ENCODE measurements at regions of chr19 and their contacts with region 1.

Region 1: DNA sequence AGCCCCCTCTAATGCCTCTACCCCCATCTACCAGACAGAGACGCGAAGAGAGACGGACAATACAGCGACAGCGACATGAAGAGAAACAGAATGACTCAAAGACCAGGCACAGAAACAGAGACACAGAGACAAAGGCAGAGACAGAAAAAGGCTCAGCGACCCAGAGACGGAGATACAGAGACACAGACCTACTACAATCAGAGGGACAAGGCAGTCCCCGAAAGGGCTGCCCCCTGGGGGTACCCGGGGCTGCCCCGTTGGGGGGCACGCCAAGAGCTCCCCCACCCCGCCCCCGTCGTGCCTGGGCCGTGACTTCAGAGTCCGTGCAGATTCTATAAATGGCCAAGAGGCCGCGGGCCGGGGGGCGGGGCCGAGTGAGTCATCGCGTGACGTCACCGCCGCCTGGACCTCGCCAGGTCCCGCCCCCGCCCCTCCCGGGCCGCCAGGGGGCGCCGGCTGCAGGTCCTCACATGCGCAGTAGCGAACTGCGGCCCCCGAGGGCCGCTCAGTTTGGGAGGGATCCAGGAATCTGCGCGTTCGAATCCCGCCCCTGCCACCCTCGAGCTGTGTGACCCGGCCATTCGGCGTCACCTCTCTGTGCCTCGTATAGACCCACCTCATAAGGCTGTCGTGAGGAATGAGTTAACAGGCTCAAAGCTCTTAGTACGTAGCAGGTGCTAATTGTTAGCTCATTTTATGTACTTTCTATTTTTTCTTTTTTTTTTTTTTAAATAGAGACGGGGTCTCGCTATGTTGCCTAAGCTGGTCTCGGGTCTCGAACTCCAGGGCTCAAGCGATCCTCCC is 2.7 kb upstream of the CNN1 start:
- DNase-seq: peak; percentile 70
- H3K4me3 ChIP-seq: peak overlapping the region; percentile 50
- H3K27ac ChIP-seq: peak overlapping the region; percentile 81
- H3K27me3 ChIP-seq: no peaks in the 10 kb centered on the region
- CTCF ChIP-seq: peak; percentile 82

Region 2: GRCh38 chr19:11549386-11549953 is 13.5 kb after region 1 on chr19:
- CTCF ChIA-PET with region 1: no interaction called
- POLR2A ChIA-PET with region 1: no interaction called
- DNase-seq: no peak
- H3K4me3 ChIP-seq: no peak overlapping the region
- H3K27ac ChIP-seq: no peak overlapping the region
- H3K27me3 ChIP-seq: no peaks in the 10 kb centered on the region
- CTCF ChIP-seq: no peak

Region 3: DNA sequence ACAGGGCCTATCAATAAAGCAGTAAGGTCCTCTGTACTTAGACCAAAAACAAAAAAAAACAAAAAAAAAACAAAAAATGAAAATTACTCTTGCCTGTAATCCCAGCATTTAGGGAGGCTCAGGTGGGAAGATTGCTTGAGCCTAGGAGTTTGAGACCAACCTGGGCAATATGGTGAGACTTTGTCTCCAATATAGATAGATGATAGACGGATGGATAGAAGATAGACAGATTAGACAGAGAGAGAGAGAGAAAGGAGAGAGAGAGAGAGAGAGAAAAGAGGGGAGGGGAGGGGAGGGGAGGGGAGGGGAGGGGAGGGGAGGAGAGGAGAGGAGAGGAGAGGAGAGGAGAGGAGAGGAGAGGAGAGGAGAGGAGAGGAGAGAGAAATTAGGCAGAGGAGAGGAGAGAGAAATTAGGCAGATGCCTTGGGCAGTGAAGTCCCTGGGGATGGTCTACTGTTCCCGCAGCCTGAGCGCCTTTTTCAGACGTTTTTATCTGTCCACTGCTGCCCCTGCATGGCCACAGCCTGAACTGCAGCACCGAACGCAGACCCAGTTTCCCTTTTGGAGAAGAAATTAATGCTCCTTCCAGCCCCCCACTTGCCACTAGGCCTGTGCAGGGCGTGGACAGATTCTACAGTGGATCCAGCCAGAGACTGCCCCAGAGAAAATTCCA is 51.4 kb after region 1 on chr19:
- CTCF ChIA-PET with region 1: interaction called, 12 read pairs
- POLR2A ChIA-PET with region 1: no interaction called
- DNase-seq: peak; percentile 20
- H3K4me3 ChIP-seq: no peak overlapping the region
- H3K27ac ChIP-seq: no peak overlapping the region
- H3K27me3 ChIP-seq: no peaks in the 10 kb centered on the region
- CTCF ChIP-seq: peak; percentile 92